Right ventricle myocardium inferior (tissue), 1 donor: ENCODE measurements at regions of chr1 and their contacts with region 1.

Region 1: DNA sequence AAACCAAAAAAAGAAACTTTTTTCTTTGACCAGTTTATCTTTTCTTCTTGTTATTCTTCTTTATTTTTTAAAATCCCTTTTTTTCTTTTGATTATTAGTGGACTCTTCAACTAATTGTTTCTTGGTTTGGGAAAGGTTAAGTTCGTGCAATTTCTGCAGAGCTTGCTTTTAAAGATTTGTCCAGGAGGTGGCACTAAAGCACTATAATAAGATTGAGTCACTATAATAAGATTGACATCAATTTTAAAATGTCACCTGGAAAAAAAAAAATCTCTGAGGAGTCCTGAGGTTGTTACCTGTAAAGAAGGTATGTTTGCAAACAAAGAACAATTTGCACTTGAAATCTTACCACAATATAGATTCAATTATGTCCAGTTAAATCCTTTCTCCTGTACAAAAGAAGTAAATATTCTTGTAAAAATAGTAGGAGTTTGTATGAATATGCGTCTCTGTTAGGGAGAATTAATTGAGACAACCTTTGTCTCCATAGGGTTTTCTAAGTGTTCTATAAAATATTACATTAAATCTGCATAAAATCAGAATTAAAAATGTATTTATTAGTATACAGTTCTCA is 166.7 kb downstream of the ADGRL4 start:
- DNase-seq: no peak
- ATAC-seq: no peak

Region 2: DNA sequence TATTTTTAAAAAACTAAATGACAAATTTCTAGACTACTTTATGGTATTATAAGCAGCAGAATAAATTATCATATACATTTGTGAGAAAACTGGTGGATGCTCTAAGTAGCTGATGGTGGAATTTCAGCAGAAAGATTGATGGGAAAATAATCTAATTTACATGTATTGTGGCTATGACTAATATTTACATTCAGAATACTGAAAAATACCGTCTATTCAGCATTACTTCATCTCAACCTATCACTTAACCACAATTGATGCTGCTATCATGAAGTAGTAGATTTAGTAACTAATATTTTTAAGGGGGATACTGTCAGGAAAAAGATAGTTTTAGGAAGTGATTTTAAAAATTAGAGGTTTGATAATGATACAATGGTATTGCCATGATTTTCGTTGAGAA is 52.2 kb before region 1 on chr1:
- intact Hi-C with region 1: no loop called
- DNase-seq: no peak
- ATAC-seq: no peak

Region 3: GRCh38 chr1:80218112-80218511 is 1378.3 kb after region 1 on chr1:
- intact Hi-C with region 1: loop called (anchors 10 kb)
- DNase-seq: no peak
- ATAC-seq: peak; percentile 46